Activated CD4-positive, alpha-beta memory T cell treated with anti-CD3 and anti-CD28 coated beads for 36 hours (primary cell): ENCODE measurements at regions of chr3 and their contacts with region 1.

Region 1: GRCh38 chr3:45507820-45508317 is 86.7 kb upstream of the LIMD1 start:
- DNase-seq: no peak
- H3K4me3 Mint-ChIP-seq: no peak overlapping the region
- H3K27ac Mint-ChIP-seq: no peak overlapping the region
- H3K4me1 Mint-ChIP-seq: peaks cover 10% of the 10 kb centered on the region
- H3K27me3 Mint-ChIP-seq: no peaks in the 10 kb centered on the region

Region 2: DNA sequence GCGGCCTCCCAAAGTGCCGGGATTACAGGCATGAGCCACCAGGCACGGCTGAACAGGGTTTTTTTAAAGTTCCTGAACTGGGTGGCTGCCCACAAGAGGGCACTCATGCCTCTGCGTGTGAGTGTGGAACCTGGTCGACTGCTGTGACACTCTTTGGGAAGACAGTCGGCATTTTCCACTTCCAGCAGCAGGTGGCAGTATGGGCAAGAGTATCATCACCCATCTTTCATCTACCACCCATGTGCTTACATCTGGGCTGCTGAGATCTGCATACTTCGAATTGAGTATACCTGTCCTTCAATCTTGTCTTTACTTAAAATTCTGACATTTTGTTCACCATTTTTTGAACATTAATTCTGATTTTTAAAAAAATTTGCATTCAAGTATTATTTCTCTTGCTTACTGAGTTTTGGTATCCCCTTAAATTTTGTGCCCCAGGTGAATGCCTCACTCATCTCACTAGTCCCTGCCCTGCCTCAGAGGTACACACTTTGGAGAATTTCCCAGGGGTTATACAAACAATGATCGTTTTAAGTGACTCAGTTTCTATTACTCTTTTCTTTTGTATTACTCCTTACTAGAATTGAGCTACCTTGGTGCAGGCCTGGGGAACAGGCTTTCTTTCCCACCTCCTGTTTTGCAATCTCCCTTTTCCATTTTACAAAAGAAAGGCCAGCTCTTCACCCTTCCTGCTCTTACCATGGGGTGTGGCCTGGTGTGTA is 470.0 kb before region 1 on chr3:
- CTCF ChIA-PET with region 1: interaction called, 33 read pairs
- POLR2A ChIA-PET with region 1: no interaction called
- intact Hi-C with region 1: loop called (anchors 2 kb)
- DNase-seq: peak; percentile 95
- H3K4me3 Mint-ChIP-seq: no peak overlapping the region
- H3K27ac Mint-ChIP-seq: no peak overlapping the region
- H3K4me1 Mint-ChIP-seq: peaks cover 34% of the 10 kb centered on the region
- H3K27me3 Mint-ChIP-seq: peaks cover 28% of the 10 kb centered on the region

Region 3: DNA sequence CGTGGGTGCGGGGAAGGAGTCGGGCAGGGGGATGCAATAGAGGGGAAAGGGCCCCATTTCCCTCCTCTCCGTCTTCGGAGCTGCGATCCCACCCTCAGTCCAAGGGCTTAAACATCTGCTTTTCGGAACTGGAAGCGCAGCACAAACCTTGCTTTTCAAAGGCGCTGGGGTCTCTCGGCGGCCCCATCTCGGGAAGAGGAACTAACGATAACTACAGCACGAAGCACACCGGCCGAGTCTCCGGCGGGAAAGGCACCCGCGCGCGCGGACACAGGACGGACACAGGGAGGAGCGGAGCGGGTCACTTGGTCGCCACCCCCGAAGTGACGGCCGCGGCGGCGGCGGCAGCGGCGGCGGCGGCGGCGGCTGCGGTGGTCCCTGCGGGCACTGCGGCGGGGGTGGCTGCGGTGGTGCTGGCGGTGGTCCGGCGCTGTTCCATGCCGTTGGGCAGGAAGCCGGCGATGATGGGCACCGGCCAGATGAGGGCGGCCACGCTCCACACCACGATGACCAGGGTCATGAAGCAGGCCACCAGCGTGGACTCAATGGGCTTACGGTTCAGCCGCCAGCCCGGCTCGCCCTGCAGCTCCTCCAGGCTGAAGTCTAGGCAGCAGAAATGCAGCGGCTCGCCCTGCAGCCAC is 282.9 kb before region 1 on chr3:
- CTCF ChIA-PET with region 1: no interaction called
- POLR2A ChIA-PET with region 1: no interaction called
- intact Hi-C with region 1: loop called (anchors 5 kb)
- DNase-seq: peak; percentile 61
- H3K4me3 Mint-ChIP-seq: peak overlapping the region; percentile 65
- H3K27ac Mint-ChIP-seq: no peak overlapping the region
- H3K4me1 Mint-ChIP-seq: peaks cover 14% of the 10 kb centered on the region
- H3K27me3 Mint-ChIP-seq: peaks cover 68% of the 10 kb centered on the region

Region 4: GRCh38 chr3:45273681-45274515 is 234.0 kb before region 1 on chr3:
- CTCF ChIA-PET with region 1: no interaction called
- POLR2A ChIA-PET with region 1: no interaction called
- intact Hi-C with region 1: no loop called
- DNase-seq: no peak
- H3K4me3 Mint-ChIP-seq: no peak overlapping the region
- H3K27ac Mint-ChIP-seq: no peak overlapping the region
- H3K4me1 Mint-ChIP-seq: no peaks in the 10 kb centered on the region
- H3K27me3 Mint-ChIP-seq: peaks cover 15% of the 10 kb centered on the region

Region 5: DNA sequence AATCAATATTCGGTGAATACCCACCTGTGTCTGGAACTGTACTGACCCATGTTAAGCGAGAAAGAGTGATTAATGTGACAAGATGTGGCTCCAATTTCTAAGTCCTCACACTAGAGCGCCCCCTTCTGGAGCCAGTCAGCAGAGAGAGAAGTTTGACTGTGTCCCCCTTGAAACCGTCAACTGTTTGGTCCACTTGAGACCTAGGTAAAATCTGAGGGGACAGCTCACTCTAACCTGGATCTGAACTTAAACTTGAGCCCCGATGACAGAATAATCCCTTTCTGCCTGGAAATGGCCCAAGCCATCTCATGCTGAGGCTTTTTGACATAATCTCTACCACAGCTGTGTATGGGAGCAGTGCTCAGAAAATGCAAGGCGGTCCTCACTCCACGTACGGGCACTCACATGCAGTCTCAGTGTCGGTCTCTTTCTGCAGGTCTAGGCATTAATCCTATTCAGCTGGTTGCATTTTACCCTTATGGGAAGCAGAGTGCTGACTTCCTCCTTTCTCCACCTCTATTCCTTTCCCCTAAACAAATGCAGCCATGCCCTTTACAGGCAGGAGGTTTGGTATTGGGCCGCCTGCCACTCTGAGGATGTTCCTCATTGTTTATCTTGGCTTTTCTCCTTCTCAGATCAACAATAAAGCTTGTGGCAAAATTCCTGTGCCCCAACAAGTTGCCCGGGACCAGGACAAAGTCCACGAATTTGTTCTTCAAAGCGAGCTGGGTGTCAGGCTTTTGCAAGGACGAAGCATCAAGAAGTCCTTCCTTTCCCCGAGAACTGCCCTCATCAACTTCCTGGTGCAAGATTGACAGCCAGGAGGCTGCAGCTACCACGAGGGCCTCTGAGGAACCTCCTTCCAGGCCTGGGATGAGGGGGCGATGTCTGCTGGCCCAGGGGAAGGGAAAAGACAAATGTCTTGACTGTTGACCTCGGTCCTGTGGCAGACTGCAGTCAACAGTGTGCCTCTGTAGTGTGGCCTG is 39.1 kb after region 1 on chr3:
- CTCF ChIA-PET with region 1: interaction called, 22 read pairs
- POLR2A ChIA-PET with region 1: no interaction called
- intact Hi-C with region 1: loop called (anchors 5 kb)
- DNase-seq: peak; percentile 56
- H3K4me3 Mint-ChIP-seq: no peak overlapping the region
- H3K27ac Mint-ChIP-seq: no peak overlapping the region
- H3K4me1 Mint-ChIP-seq: peaks cover 3% of the 10 kb centered on the region
- H3K27me3 Mint-ChIP-seq: no peaks in the 10 kb centered on the region

Region 6: DNA sequence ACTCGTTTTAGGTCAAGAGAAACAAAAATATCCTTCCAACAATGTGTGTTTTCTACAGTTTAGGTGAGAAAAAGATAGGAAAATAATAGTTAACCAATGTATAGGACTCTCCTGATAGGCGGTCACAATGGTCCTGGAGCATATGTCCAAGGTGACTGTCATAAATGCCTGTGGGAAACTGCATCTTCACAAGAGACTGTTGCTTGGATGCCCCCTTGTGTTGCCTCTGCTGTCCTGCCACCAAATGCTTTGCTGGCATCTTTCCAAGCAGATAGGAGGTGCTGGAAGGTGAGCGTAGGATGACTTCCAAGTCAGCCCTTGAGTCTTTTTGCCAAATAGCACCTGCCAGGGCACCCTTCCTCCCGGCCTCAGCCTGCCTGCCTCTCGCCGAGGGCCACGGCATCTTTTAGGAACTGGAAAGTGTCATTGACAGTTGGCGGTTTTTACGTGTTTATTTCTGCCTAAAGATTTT is 157.3 kb after region 1 on chr3:
- CTCF ChIA-PET with region 1: interaction called, 138 read pairs
- POLR2A ChIA-PET with region 1: interaction called, 4 read pairs
- intact Hi-C with region 1: loop called (anchors 2 kb)
- DNase-seq: peak; percentile 80
- H3K4me3 Mint-ChIP-seq: peak overlapping the region; percentile 76
- H3K27ac Mint-ChIP-seq: peak overlapping the region; percentile 83
- H3K4me1 Mint-ChIP-seq: peaks cover 51% of the 10 kb centered on the region
- H3K27me3 Mint-ChIP-seq: no peaks in the 10 kb centered on the region